ENCODE measurements at regions of chr4 and their contacts with region 1.

Region 1: DNA sequence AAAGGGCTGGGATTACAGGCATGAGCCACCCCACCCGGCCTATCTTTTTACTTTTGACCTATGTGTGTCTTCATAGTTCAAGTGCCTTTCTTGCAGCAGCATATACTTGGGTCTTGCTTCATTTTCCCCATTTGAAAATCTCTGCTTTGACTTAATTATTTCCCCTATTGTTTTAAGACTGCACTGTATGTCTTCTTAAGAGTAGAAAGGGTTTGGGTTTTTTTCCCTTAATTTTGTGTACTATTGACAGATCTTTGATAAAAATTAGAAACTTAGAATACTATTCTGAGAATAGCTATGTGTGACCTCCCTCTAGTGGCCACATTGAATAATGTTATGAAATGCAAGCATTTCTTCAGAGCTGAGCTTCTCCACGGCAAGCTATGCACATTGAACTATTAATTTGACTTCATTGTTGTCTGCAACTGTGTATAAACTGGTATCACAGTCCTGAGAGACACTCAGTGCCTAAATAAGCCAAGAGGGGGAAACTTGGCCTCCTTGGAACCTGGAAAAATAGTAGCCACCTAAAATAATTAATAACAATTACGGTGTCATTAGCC is 8.7 kb upstream of the SLC25A4 start:
- DNase-seq: no peak
- H3K4me3 Mint-ChIP-seq: no peak overlapping the region
- H3K27ac Mint-ChIP-seq: no peak overlapping the region
- H3K4me1 Mint-ChIP-seq: no peaks in the 10 kb centered on the region
- H3K27me3 Mint-ChIP-seq: peaks cover 25% of the 10 kb centered on the region

Region 2: DNA sequence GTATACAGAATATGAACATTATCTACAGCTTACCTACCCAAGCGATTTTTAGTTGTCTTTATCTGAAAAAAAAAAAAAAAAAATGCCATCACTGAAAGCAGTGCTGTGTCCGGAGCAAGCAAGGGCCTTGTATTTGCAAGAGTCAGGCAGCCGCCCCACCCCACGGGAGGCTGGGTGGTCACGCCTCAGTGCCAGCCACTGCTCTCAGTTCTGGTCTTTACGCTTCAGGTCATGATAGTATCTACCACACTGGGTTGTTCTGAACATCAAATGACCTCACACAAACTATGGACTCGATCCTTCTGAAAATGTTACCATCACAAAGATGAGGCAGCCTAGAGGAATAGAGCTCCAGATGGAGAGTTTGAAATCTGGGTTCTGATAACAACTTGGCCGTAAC is 178.7 kb before region 1 on chr4:
- CTCF ChIA-PET with region 1: no interaction called
- POLR2A ChIA-PET with region 1: no interaction called
- intact Hi-C with region 1: no loop called
- DNase-seq: no peak
- H3K4me3 Mint-ChIP-seq: no peak overlapping the region
- H3K27ac Mint-ChIP-seq: no peak overlapping the region
- H3K4me1 Mint-ChIP-seq: no peaks in the 10 kb centered on the region
- H3K27me3 Mint-ChIP-seq: no peaks in the 10 kb centered on the region

Region 3: DNA sequence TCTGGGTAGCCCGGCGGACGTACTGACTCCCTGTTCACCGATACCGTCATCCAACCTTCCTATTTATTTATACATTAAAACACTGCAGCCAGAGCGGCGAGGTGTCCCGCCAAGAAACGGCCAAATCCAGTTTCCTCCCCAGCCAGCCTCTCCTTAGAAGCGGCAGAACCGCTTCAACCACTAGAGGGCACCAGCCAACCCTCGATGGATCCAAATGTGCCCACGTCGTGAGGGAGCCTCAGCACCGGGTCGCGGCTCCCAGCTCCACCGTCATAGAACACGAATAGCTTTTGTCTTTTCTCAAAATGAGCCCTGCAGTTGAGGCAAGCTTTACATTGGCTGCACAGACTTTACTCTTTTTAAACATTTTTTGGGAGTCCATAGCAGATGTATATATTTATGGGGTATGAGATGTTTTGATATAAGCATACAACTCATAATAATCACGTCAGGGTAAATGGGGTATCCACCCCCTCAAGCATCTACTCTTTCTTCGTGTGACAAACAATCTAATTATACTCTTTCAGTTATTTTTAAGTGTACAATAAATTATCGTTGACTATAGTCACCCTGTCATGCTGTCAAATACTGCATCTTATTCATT is 129.1 kb before region 1 on chr4:
- CTCF ChIA-PET with region 1: interaction called, 18 read pairs
- POLR2A ChIA-PET with region 1: no interaction called
- intact Hi-C with region 1: loop called (anchors 1 kb)
- DNase-seq: peak; percentile 87
- H3K4me3 Mint-ChIP-seq: no peak overlapping the region
- H3K27ac Mint-ChIP-seq: no peak overlapping the region
- H3K4me1 Mint-ChIP-seq: peaks cover 7% of the 10 kb centered on the region
- H3K27me3 Mint-ChIP-seq: peaks cover 30% of the 10 kb centered on the region

Region 4: GRCh38 chr4:185031611-185032010 is 102.8 kb before region 1 on chr4:
- CTCF ChIA-PET with region 1: interaction called, 87 read pairs
- POLR2A ChIA-PET with region 1: no interaction called
- intact Hi-C with region 1: no loop called
- DNase-seq: no peak
- H3K4me3 Mint-ChIP-seq: no peak overlapping the region
- H3K27ac Mint-ChIP-seq: no peak overlapping the region
- H3K4me1 Mint-ChIP-seq: no peaks in the 10 kb centered on the region
- H3K27me3 Mint-ChIP-seq: peaks cover 10% of the 10 kb centered on the region

Region 5: GRCh38 chr4:185096032-185096653 is 38.2 kb before region 1 on chr4:
- CTCF ChIA-PET with region 1: interaction called, 15 read pairs
- POLR2A ChIA-PET with region 1: no interaction called
- intact Hi-C with region 1: no loop called
- DNase-seq: no peak
- H3K4me3 Mint-ChIP-seq: no peak overlapping the region
- H3K27ac Mint-ChIP-seq: no peak overlapping the region
- H3K4me1 Mint-ChIP-seq: no peaks in the 10 kb centered on the region
- H3K27me3 Mint-ChIP-seq: peaks cover 11% of the 10 kb centered on the region

Measured in activated CD4-positive, alpha-beta memory T cell treated with anti-CD3 and anti-CD28 coated beads for 36 hours (primary cell).